ENCODE measurements at regions of chr16 and their contacts with region 1.

Region 1: DNA sequence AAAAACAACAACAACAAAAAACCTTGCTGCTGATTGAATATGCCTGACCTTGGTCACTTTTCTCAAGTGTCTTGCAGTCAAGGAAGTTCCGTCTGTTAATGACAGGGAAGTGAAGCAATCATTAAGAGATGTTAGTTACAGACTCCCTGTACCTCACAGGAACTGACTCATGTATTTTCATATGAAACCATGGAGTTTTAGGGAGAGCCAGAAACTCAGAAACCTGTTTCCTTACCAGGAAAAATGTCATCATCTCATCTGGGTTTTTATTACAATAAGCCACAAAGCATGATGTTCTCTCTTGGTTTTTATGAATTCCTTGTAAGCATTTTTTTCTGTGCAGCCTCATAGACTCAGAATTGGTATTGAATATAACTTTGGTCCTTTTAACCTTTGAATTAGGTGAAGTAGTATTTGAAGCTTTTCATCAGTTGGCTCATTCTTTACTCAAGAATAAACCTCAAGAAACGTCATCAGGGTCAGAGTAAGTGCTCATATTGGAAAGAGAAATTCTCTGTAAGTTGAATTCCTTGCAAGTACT is 10.3 kb downstream of the LYRM1 start:
- DNase-seq: no peak
- H3K4me3 Mint-ChIP-seq: no peak overlapping the region
- H3K27ac Mint-ChIP-seq: peak overlapping the region; percentile 75
- H3K4me1 Mint-ChIP-seq: peaks cover 24% of the 10 kb centered on the region
- H3K27me3 Mint-ChIP-seq: no peaks in the 10 kb centered on the region

Region 2: DNA sequence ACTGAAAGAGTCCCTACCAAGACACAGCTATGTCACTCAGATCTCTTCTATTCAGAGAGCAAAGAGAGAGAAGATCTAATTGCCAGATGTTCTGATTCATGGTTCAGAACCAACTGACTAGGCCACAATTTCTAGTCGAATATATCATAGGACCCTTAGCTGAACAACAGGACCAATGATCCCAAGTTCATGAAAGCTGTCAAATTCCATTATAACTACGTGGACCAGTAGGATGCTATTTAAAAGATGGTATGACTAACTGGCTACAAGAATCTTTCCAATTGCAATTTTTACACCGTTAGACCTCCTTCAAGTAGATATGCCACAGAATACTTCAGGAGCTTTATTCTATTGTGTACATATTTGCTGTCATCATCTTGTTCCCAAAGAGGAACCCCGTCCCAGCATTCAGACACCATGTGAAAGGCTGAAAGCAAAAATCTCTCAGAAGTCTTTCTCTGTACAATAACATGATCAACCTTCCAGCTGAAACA is 36.7 kb before region 1 on chr16:
- CTCF ChIA-PET with region 1: no interaction called
- POLR2A ChIA-PET with region 1: interaction called, 6 read pairs
- intact Hi-C with region 1: loop called (anchors 1 kb)
- DNase-seq: no peak
- H3K4me3 Mint-ChIP-seq: peak overlapping the region; percentile 34
- H3K27ac Mint-ChIP-seq: peak overlapping the region; percentile 81
- H3K4me1 Mint-ChIP-seq: peaks cover 46% of the 10 kb centered on the region
- H3K27me3 Mint-ChIP-seq: no peaks in the 10 kb centered on the region

Region 3: DNA sequence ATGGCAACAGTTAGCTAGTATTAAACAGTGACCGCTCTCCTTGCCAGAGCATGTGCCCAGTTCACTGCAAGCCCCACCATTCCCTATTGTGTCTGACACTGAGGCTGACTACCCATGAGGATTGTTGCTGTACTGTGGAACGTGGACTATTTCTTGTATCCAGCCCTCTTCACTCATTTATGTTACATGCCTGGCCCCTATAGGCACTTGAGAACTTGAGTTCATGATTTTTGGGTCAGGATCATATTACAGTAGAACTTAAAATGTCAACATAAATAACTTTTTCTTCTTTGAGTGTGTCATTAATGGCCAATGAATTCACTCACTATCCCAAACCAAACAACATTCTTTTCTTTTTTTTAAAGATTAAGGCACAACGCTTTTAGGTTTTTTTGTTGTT is 45.5 kb after region 1 on chr16:
- CTCF ChIA-PET with region 1: no interaction called
- POLR2A ChIA-PET with region 1: no interaction called
- intact Hi-C with region 1: no loop called
- DNase-seq: no peak
- H3K4me3 Mint-ChIP-seq: no peak overlapping the region
- H3K27ac Mint-ChIP-seq: no peak overlapping the region
- H3K4me1 Mint-ChIP-seq: no peaks in the 10 kb centered on the region
- H3K27me3 Mint-ChIP-seq: peaks cover 5% of the 10 kb centered on the region

Region 4: DNA sequence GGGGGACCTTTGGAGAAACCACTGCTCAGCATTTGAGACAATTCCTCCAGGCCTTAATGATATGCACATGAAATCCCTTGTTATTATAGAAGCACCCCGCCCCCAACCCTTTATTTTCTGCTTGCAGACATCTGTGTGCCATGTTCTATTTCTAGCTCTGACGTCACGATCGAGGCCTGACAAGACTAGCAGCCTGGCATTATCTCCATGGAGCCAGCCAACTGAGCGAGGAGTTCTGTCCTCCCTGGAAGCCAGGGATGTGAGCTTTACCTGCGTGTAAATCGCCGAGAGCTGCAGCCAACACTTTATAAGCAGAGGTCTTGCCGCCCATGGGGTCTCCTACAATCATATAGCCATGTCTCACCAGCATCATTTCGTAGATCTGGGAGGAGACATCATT is 122.9 kb after region 1 on chr16:
- CTCF ChIA-PET with region 1: no interaction called
- POLR2A ChIA-PET with region 1: no interaction called
- intact Hi-C with region 1: no loop called
- DNase-seq: no peak
- H3K4me3 Mint-ChIP-seq: no peak overlapping the region
- H3K27ac Mint-ChIP-seq: no peak overlapping the region
- H3K4me1 Mint-ChIP-seq: no peaks in the 10 kb centered on the region
- H3K27me3 Mint-ChIP-seq: peaks cover 6% of the 10 kb centered on the region

Measured in activated CD4-positive, alpha-beta memory T cell treated with anti-CD3 and anti-CD28 coated beads for 36 hours (primary cell).